Activated CD8-positive, alpha-beta T cell treated with anti-CD3 and anti-CD28 coated beads for 36 hours (primary cell): ENCODE measurements at regions of chr11 and their contacts with region 1.

Region 1: DNA sequence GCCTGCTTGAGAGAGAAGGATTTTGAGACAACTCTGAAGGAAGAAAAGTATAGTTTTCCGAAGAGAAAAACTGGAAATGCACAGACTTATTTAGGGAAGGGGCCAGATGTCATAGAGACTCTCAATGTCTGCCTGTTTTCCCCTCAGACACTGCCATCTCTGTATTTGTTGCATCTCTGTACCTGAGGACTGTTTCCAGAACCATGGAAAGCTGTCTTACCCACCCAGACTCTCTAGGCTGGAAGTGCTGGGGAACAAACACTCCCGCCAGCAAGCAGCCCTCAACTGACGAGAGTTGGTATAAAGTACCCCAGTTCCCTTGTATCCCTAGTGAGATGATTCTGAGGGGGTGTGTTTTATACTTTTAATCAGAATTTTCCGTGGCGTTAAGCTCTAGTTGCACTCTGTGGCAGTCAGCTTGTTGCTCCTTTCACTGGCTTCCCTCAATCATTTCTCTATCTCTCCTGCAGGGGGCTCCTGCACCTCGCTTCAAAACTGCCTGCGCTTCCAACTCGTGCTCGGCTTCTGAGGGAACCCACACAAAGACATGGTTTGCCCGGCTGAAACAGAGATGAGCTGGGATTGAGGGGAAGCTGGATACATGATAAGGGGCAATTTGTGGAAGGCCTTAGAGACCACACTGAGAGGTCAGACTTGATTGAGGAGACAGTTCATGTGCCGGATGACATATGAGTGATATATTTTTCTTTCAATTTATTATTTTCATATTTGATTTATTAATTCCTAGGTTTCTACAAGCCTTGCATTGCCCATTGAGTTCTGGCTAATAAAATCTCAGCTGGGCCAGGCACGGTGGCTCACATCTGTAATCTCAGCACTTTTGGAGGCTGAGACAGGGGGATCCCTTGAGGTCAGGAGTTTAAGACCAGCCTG is 36.9 kb upstream of the CLPB start:
- DNase-seq: peak; percentile 68
- ATAC-seq: peak; percentile 96
- H3K4me3 Mint-ChIP-seq: peak overlapping the region; percentile 15
- H3K27ac Mint-ChIP-seq: no peak overlapping the region
- H3K4me1 Mint-ChIP-seq: peaks cover 2% of the 10 kb centered on the region
- H3K27me3 Mint-ChIP-seq: peaks cover 19% of the 10 kb centered on the region
- CTCF ChIP-seq: peak; percentile 66

Region 2: DNA sequence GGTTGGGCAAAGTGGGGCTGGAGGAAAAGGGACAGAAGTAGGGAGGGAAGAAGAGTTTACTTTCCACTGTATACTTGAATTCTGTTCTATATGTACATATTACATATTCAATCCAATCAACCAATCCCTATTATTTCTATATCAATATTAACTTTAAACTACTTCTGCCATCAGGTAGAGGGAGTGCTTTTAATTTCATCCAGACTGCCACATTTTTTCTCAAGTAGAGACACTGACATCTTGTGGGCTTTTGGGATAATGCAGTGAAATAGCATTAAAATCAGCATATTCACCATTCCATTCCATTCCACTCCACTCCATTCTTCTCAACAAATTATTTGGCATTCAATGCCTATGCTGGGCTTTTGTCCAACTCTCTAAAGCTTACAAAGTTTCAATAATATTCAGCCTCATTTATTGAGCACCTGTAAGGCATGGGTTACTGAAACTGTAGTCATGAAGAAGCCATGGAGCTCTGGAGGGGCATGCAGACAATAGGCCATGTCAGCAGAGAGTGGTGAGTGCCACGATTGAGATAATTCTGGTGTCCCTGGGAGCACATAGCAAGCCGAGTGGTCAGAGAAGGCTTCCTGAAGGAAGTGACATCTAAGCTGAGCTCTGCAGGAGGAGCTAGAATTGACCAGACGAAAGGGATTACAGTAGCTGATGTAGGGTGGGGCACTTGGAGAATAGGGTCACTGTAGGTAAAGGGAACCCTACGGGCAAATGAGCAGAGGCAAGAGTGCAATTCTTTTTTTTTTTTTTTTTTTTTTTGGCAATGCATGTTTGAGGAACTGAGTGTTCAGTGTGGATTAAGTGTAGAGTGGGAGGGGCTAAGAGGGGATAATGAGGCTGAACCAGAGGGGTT is 24.1 kb before region 1 on chr11:
- CTCF ChIA-PET with region 1: interaction called, 12 read pairs
- POLR2A ChIA-PET with region 1: no interaction called
- intact Hi-C with region 1: no loop called
- DNase-seq: no peak
- ATAC-seq: peak; percentile 66
- H3K4me3 Mint-ChIP-seq: no peak overlapping the region
- H3K27ac Mint-ChIP-seq: no peak overlapping the region
- H3K4me1 Mint-ChIP-seq: no peaks in the 10 kb centered on the region
- H3K27me3 Mint-ChIP-seq: peaks cover 4% of the 10 kb centered on the region
- CTCF ChIP-seq: peak; percentile 82

Region 3: DNA sequence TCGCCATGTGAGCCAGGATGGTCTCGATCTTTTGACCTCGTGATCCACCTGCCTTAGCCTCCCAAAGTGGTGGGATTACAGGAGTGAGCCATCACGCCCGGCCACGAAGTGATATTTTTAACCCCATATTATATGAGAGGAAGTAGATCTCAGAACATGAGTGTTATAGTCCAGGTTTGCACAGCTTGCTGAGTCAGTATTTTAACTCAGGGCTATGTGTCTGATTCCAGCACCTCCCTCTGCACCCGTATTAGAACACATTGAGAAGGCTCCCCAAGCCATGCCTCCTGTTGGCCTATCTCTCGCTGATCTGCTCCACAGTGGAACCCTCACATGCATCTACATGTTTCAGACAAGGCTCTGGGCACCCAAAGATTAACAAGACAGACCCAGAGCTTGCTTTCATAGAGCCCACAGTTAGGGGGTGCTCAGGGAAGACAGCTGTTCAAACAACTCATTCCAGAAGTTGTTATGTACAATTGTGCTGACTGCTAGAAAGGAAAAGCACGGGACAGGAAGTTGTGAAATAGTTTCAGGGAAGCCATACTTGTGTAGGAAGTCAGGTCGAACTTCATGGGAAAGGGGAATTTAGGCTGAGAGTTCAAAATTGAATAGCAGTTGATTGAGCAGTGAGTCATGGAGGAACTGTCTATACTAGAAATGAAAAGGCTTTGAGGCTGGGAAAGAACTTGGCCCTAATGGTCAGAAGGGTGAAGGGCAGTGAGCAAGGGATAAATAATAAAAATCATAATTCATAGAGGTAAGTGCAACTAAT is 12.3 kb after region 1 on chr11:
- CTCF ChIA-PET with region 1: interaction called, 27 read pairs
- POLR2A ChIA-PET with region 1: no interaction called
- intact Hi-C with region 1: no loop called
- DNase-seq: peak; percentile 19
- ATAC-seq: peak; percentile 74
- H3K4me3 Mint-ChIP-seq: no peak overlapping the region
- H3K27ac Mint-ChIP-seq: peak overlapping the region; percentile 26
- H3K4me1 Mint-ChIP-seq: peaks cover 14% of the 10 kb centered on the region
- H3K27me3 Mint-ChIP-seq: peaks cover 2% of the 10 kb centered on the region
- CTCF ChIP-seq: no peak

Region 4: GRCh38 chr11:72553706-72554105 is 82.5 kb after region 1 on chr11:
- CTCF ChIA-PET with region 1: interaction called, 105 read pairs
- POLR2A ChIA-PET with region 1: no interaction called
- intact Hi-C with region 1: no loop called
- DNase-seq: peak; percentile 71
- ATAC-seq: peak; percentile 64
- H3K4me3 Mint-ChIP-seq: no peak overlapping the region
- H3K27ac Mint-ChIP-seq: no peak overlapping the region
- H3K4me1 Mint-ChIP-seq: no peaks in the 10 kb centered on the region
- H3K27me3 Mint-ChIP-seq: peaks cover 6% of the 10 kb centered on the region
- CTCF ChIP-seq: peak; percentile 54

Region 5: DNA sequence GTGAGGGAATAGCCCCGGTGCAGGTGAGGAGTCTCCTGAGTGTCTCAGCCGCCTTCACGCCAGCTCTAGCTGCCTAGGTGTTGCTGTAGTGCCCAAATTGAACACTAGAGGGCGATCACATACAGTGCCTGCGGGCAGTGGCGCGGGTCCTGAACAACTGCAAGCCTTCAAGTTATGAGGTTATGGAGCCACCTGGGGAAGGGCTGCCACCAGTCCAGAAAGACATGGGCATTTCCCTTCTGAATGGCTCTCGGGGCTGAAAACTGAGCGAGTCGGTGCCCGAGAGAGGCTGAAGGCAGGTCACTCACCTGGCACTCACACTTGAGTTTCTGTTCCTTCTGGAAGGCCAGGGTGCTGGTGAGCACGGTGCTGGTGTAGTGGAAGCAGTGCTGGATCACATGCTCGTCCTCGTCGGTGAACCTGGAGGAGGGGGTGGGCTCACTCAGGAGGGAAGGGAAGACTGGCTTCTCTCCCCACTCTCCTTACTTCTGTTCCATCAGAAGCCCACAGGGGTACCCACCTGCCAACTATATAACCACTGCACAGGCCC is 114.6 kb after region 1 on chr11:
- CTCF ChIA-PET with region 1: interaction called, 20 read pairs
- POLR2A ChIA-PET with region 1: no interaction called
- intact Hi-C with region 1: no loop called
- DNase-seq: peak; percentile 72
- ATAC-seq: peak; percentile 86
- H3K4me3 Mint-ChIP-seq: peak overlapping the region; percentile 62
- H3K27ac Mint-ChIP-seq: no peak overlapping the region
- H3K4me1 Mint-ChIP-seq: peaks cover 25% of the 10 kb centered on the region
- H3K27me3 Mint-ChIP-seq: peaks cover 38% of the 10 kb centered on the region
- CTCF ChIP-seq: peak; percentile 92

Region 6: DNA sequence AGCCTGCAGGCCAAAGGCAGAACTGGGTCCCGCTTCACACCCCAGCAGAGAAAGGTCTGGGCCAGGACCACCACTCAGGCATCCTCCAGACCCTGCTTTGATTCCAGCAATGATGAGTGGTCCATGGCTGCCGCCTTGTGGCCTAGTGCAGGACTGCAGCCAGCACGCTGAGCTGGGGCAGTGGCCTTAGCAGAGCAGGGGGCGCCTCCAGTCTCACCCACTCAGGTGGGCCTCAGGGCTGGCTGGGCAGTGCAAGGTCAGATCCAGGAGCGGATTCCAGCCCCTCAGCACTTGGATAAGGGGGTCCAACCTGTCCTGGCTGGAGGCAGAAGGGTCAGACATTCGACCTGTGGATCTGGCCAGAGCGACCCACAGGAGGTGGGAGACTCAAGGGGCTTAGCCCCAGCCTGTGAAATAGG is 212.5 kb after region 1 on chr11:
- CTCF ChIA-PET with region 1: interaction called, 23 read pairs
- POLR2A ChIA-PET with region 1: interaction called, 3 read pairs
- intact Hi-C with region 1: no loop called
- DNase-seq: peak; percentile 85
- ATAC-seq: peak; percentile 74
- H3K4me3 Mint-ChIP-seq: no peak overlapping the region
- H3K27ac Mint-ChIP-seq: no peak overlapping the region
- H3K4me1 Mint-ChIP-seq: peaks cover 23% of the 10 kb centered on the region
- H3K27me3 Mint-ChIP-seq: no peaks in the 10 kb centered on the region
- CTCF ChIP-seq: peak; percentile 90